ENCODE measurements at regions of chr19 and their contacts with region 1.

Region 1: DNA sequence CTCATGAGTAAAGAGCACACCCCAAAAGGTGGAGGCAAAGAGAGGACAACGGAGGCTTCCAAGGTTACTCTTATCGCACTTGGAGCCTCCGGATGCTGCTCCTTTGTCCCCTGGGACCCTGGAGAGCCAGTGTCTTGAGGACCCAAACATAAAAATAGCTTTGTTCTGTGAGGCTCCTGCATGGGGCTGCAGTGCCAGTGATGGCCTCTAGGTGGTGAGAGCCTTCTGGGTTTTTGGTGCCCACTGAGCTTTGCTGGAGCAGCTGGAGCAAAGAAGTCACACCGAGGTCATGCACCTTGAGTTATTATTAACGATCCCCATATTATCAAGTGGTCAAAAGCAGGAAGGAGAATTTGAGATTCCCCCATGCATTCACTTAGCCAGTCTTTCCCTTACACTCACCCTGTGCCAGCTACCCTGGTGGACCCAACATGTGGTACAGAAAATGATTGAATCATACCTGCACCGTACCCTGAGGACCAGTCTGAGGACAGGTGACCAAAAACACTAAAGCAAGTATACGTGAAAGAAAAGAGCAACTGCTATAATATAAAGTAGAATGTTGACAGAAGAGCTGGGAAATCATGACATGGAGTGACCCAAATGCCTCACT is 41.5 kb downstream of the ZNF682 start:
- DNase-seq: no peak
- H3K4me3 ChIP-seq: no peak overlapping the region
- H3K27ac ChIP-seq: no peak overlapping the region
- H3K4me1 ChIP-seq: no peaks in the 10 kb centered on the region
- H3K27me3 ChIP-seq: no peaks in the 10 kb centered on the region
- CTCF ChIP-seq: peak; percentile 8 to 31

Region 2: GRCh38 chr19:19956434-19957075 is 41.2 kb before region 1 on chr19:
- CTCF ChIA-PET with region 1: no interaction called
- dilution Hi-C with region 1: loop called (anchors 5 kb)
- in situ Hi-C with region 1: no loop called
- intact Hi-C with region 1: no loop called
- DNase-seq: no peak
- H3K4me3 ChIP-seq: no peak overlapping the region
- H3K27ac ChIP-seq: no peak overlapping the region
- H3K4me1 ChIP-seq: no peaks in the 10 kb centered on the region
- H3K27me3 ChIP-seq: no peaks in the 10 kb centered on the region
- CTCF ChIP-seq: no peak

Region 3: GRCh38 chr19:20067943-20068342 is 70.2 kb after region 1 on chr19:
- CTCF ChIA-PET with region 1: no interaction called
- dilution Hi-C with region 1: loop called (anchors 5 kb)
- in situ Hi-C with region 1: no loop called
- intact Hi-C with region 1: no loop called
- DNase-seq: no peak
- H3K4me3 ChIP-seq: no peak overlapping the region
- H3K27ac ChIP-seq: no peak overlapping the region
- H3K4me1 ChIP-seq: no peaks in the 10 kb centered on the region
- H3K27me3 ChIP-seq: no peaks in the 10 kb centered on the region
- CTCF ChIP-seq: no peak

Measured in mammary epithelial cell (primary cell).